ENCODE measurements at regions of chr10 and their contacts with region 1.

Region 1: DNA sequence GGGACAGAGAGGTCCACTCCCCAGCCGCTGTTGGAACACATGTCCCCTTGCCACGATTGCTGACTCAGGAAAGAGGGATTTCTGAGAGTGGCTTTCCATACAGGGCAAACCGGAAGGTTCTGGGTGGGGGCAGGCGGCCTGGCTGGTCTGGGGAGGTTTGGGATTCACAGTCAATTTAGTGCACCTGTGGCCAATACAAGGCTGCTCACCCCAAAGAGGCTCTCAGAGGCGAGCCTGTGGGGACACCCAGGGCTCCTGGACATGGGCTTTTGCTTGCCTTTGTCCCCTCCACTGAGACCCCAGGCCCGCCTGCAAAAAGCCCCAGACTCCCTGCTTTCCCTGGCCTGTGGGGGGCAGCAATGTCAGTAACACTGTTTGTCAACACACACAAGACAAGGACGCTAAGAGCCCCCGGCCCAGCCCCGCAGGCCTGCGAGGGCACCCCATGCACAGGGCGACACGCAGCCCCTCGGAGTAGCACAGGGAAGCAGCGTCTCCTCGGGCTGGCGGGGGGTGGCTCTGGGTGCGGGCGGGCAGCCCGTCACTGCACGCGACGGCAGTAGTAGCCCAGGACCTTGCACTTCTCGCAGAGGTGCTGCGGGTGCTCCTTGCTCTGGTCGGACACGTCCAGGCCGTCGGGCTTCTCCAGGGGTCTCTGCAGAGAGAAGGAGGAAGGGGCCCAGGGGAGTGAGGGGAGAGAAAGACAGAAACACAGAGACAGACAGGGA is 38.7 kb downstream of the PPIF start:
- DNase-seq: peak in 1 of 2 donors; percentile 14
- H3K4me3 ChIP-seq: no peak overlapping the region
- H3K27ac ChIP-seq: peak overlapping the region in 1 of 2 donors; percentile 54
- H3K4me1 ChIP-seq: no peaks in the 10 kb centered on the region
- H3K27me3 ChIP-seq: no peaks in the 10 kb centered on the region
- CTCF ChIP-seq: no peak
- POLR2A ChIP-seq: no peak

Region 2: DNA sequence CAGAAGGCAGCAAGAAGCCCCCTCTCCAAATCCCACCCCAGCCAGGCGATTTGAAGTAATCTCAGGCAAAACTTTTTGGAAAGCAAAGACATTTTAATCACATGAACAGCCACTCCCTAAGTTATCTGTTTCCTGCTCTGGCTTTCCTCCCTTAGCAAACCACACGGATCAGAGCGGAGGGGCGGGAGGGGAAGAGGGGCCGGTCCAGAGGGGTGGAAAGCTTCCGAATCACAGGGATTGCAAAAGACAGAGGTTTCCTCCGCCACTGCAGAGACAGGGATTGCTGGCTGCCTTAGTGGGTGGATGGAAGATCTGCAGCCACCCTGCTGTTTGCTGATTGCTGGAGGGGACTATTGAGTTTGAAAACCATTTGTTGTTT is 18.3 kb after region 1 on chr10:
- intact Hi-C with region 1: no loop called
- DNase-seq: peak; percentile 52 to 64
- H3K4me3 ChIP-seq: peak overlapping the region in 2 of 3 donors; percentile 24 to 52
- H3K27ac ChIP-seq: peak overlapping the region in 1 of 2 donors; percentile 93
- H3K4me1 ChIP-seq: peaks cover 39 to 70% of the 10 kb centered on the region in 2 donors
- H3K27me3 ChIP-seq: no peaks in the 10 kb centered on the region
- CTCF ChIP-seq: no peak
- POLR2A ChIP-seq: no peak

Region 3: DNA sequence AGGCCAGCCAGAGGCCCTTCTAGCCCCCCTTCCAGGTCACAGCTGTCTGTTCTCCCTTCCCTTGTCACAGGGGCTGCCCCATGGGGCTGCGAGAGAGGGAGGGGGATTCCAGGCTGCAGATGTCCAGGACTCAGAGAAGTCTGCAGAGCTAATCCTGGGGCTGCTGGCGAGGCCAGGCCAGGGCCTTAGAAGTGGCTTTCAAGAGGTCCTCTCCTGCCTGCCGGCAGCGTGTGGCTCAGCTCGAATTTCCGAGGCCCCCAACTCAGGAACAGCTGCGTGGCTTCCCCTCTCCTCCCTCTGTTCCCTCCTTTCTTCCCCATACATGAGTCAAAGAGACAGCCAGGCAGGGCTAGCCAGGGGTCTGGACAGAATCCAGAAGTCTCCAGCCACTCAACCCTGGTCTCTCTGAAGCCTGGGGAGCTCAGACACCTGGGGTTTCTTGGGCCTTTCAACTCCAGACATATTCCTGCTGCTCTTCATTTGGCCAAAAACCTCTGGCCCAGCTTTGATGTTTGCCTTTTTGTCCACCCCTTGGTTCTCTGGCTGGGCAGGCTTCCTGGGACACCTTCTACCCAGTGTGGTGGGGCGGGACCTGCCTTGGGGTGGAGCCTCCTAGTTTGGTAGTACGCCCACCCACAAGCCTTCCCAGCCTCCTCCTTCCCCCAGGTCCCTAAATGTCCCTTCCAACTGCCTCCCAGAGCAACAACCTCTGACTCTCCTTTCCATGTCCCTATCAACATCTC is 104.6 kb after region 1 on chr10:
- intact Hi-C with region 1: loop called (anchors 5 kb)
- DNase-seq: no peak
- H3K4me3 ChIP-seq: no peak overlapping the region
- H3K27ac ChIP-seq: peak overlapping the region in 1 of 2 donors; percentile 55
- H3K4me1 ChIP-seq: no peaks in the 10 kb centered on the region
- H3K27me3 ChIP-seq: no peaks in the 10 kb centered on the region
- CTCF ChIP-seq: no peak
- POLR2A ChIP-seq: no peak

Measured in breast epithelium (tissue), 4 donors.